ENCODE measurements at regions of chr15 and their contacts with region 1.

Region 1: GRCh38 chr15:63157118-63157843 is at the start of gene RPS27L:
- DNase-seq: peak; percentile 94
- ATAC-seq: peak; percentile 97
- H3K4me3 Mint-ChIP-seq: peak within 1 kb of the TSS; percentile 98
- H3K27ac Mint-ChIP-seq: peak within 1 kb of the TSS; percentile 97
- H3K4me1 Mint-ChIP-seq: peaks cover 17% of the 10 kb centered on the region
- H3K27me3 Mint-ChIP-seq: no peaks in the 10 kb centered on the region
- CTCF ChIP-seq: no peak
- total RNA-seq, gene RPS27L: 150 to 158 TPM

Region 2: DNA sequence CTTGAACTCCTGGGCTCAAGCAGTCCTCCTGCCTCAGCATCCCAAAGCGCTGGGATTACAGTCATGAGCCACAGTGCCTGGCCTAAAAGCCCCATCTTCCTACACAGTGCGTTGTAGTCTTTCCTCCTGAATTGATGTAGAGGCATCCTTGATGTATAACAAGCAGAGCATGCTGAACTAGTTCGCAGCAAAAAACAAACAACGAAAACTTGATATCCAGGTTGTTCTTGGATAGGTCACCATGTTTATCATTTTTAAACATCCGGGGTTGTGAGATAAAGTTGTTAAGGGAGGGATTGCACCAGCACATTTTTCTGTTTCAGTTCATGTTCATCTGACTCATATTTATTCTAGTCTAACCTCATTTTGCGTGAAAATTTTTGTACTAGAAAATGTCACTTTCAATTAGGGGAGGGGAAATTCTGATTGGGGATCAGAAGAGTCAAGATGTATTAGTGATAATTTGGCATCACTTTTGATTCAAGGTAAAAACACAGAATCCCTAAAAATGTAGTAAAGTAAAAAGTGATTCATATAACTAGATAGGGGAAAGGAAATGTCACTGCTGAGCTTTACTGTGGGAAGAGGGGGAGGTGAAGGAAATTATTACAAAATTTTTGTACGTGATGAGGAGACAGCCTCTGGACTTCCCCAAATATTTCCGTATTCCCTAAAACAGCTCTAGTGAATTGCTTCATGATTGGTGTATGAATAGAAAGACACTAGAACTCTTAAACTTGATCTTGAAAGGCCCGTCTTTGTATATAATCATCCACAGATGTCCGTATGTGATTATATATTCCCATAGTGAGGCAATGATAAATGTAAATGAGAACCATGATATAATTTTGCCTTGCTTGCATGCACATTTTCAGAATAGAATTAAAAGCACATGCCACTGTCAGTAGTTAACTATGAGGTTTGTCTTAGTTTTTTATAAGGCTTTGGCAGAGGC is 55.0 kb after region 1 on chr15:
- CTCF ChIA-PET with region 1: interaction called, 3 read pairs
- POLR2A ChIA-PET with region 1: interaction called, 4 read pairs
- intact Hi-C with region 1: loop called (anchors 10 kb)
- DNase-seq: no peak
- ATAC-seq: peak; percentile 65
- H3K4me3 Mint-ChIP-seq: peak overlapping the region; percentile 67
- H3K27ac Mint-ChIP-seq: peak overlapping the region; percentile 99
- H3K4me1 Mint-ChIP-seq: peaks cover 86% of the 10 kb centered on the region
- H3K27me3 Mint-ChIP-seq: no peaks in the 10 kb centered on the region
- CTCF ChIP-seq: no peak

Region 3: GRCh38 chr15:63277038-63277892 is 120.0 kb after region 1 on chr15 and contains the start of gene APH1B:
- CTCF ChIA-PET with region 1: interaction called, 3 read pairs
- POLR2A ChIA-PET with region 1: no interaction called
- intact Hi-C with region 1: loop called (anchors 10 kb)
- DNase-seq: peak; percentile 77
- ATAC-seq: peak; percentile 84
- H3K4me3 Mint-ChIP-seq: peak within 1 kb of the TSS; percentile 81
- H3K27ac Mint-ChIP-seq: peak within 1 kb of the TSS; percentile 91
- H3K4me1 Mint-ChIP-seq: peaks cover 33% of the 10 kb centered on the region
- H3K27me3 Mint-ChIP-seq: no peaks in the 10 kb centered on the region
- CTCF ChIP-seq: no peak
- total RNA-seq, gene APH1B: 7.0 to 9.7 TPM